Activated T-helper 2 cell treated with anti-CD3 and anti-CD28 coated beads, Interferon-gamma antibody, Interleukin-2, Interleukin-4, amounts not matched to agents 10 μg/mL and 5 μg/mL and 100 μg/mL, durations not matched to agents 14 hours and 24 hours and 36 hours (primary cell): ENCODE measurements at regions of chr1 and their contacts with region 1.

Region 1: GRCh38 chr1:59699227-59699847 is 115.4 kb upstream of the HOOK1 start:
- DNase-seq: peak; percentile 13
- H3K4me3 Mint-ChIP-seq: no peak overlapping the region
- H3K27ac Mint-ChIP-seq: no peak overlapping the region
- H3K4me1 Mint-ChIP-seq: peaks cover 26% of the 10 kb centered on the region
- H3K27me3 Mint-ChIP-seq: no peaks in the 10 kb centered on the region

Region 2: DNA sequence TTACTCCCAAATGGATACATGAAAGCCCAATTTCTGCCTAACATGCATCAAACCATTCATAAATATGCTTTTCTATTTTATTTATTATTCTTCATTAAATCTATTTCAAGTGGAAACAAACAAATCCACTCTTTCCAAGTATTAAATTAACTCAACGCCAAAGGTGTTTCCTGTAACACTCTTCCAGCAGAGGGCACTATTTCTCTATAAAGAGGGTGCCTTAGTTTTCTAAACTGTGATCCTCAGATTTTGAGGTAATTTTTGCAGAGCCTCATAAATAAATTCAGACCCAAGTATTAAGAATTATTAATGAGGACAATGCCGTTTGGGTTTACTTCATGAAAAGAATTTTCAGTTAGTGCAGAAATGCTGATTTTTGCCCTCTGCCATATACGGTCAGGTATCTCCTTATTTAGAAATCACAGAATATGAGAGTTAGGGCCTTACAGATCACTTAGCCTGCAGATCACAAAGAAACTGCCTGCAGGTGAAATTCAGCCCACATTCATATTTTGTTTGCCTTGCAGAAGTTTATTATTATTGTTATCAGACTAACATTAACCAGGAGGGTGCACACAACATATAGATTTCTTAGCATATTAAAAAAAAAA is 959.4 kb before region 1 on chr1:
- intact Hi-C with region 1: loop called (anchors 1 kb)
- DNase-seq: no peak
- H3K4me3 Mint-ChIP-seq: no peak overlapping the region
- H3K27ac Mint-ChIP-seq: no peak overlapping the region
- H3K4me1 Mint-ChIP-seq: peaks cover 16% of the 10 kb centered on the region
- H3K27me3 Mint-ChIP-seq: peaks cover 4% of the 10 kb centered on the region

Region 3: GRCh38 chr1:59143133-59143487 is 556.2 kb before region 1 on chr1:
- intact Hi-C with region 1: loop called (anchors 2 kb)
- DNase-seq: no peak
- H3K4me3 Mint-ChIP-seq: no peak overlapping the region
- H3K27ac Mint-ChIP-seq: peak overlapping the region; percentile 62
- H3K4me1 Mint-ChIP-seq: peaks cover 59% of the 10 kb centered on the region
- H3K27me3 Mint-ChIP-seq: no peaks in the 10 kb centered on the region

Region 4: GRCh38 chr1:59296358-59297256 is 402.7 kb before region 1 on chr1 and contains the start of gene FGGY:
- intact Hi-C with region 1: loop called (anchors 5 kb)
- DNase-seq: peak; percentile 85
- H3K4me3 Mint-ChIP-seq: peak within 1 kb of the TSS; percentile 93
- H3K27ac Mint-ChIP-seq: peak within 1 kb of the TSS; percentile 88
- H3K4me1 Mint-ChIP-seq: peaks cover 36% of the 10 kb centered on the region
- H3K27me3 Mint-ChIP-seq: no peaks in the 10 kb centered on the region
- total RNA-seq, gene FGGY: 10.5 and 13.4 TPM in 2 replicates

Region 5: DNA sequence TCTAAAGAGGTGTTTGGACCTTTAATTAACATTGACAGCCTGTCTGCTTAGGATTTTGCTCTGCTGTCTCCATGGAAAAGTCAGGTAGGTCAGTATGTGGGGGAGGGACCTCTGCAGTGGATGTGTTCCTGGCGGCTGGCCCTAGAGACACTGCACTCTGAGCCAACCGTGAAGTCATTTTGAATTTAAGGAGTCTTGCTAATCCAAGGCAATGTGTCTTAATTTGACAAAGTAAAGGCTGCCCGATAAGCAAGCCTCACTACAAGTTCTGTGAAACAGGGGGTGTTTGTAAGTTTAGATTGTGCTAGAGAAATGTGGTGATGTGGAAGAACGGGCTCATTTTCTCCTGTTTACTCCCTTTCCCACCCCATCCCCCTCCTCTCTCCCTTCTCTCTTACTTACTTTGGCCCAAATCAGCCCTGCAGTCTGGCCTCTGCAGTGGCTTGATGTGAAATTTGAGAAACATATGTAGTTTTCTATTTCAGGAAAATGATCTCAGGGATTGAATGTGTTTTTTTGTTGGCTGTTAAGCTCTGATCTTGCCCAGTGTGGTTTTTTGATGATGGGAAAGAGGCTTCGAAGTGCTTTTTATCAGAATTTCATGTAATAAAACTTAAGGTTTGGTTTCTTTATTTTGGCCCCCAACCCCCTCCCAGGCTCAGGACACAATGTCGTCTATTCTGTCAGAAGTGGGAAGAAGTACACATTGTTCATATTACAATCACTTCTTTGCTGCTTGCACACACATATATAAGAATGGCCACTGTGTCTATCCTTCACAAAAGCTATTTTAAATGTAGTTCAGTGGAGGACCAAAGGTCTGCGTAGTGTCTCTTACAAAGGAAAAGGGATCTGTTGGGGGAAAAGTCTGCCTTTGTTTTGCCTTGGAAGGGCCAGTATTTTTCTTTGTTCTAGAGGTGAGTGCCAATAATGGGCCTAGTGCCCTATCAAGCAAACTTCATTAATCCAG is 305.8 kb before region 1 on chr1:
- intact Hi-C with region 1: loop called (anchors 5 kb)
- DNase-seq: no peak
- H3K4me3 Mint-ChIP-seq: no peak overlapping the region
- H3K27ac Mint-ChIP-seq: peak overlapping the region; percentile 52
- H3K4me1 Mint-ChIP-seq: peaks cover 55% of the 10 kb centered on the region
- H3K27me3 Mint-ChIP-seq: no peaks in the 10 kb centered on the region

Region 6: DNA sequence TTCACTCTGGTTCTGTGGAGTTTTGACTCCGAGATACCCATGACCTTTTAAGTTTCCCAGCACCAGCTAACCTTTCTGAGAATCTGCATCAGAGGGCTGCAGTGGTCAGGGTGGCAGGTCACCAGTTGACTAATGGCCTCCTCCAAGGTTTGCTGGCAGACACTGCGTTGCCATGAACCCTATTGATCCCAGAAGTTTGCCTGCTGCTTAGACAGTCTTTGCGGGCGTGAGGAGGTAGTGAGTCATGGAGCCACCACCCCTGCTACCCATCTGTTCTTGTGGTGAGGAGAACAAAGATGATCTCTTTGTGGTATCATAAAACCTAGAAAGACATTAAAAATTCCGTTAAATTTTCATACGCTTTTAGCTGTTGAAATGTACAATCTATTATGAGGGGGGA is 222.1 kb before region 1 on chr1:
- intact Hi-C with region 1: loop called (anchors 5 kb)
- DNase-seq: peak; percentile 40
- H3K4me3 Mint-ChIP-seq: peak overlapping the region; percentile 54
- H3K27ac Mint-ChIP-seq: peak overlapping the region; percentile 91
- H3K4me1 Mint-ChIP-seq: peaks cover 21% of the 10 kb centered on the region
- H3K27me3 Mint-ChIP-seq: no peaks in the 10 kb centered on the region